ENCODE measurements at regions of chr13 and their contacts with region 1.

Region 1: DNA sequence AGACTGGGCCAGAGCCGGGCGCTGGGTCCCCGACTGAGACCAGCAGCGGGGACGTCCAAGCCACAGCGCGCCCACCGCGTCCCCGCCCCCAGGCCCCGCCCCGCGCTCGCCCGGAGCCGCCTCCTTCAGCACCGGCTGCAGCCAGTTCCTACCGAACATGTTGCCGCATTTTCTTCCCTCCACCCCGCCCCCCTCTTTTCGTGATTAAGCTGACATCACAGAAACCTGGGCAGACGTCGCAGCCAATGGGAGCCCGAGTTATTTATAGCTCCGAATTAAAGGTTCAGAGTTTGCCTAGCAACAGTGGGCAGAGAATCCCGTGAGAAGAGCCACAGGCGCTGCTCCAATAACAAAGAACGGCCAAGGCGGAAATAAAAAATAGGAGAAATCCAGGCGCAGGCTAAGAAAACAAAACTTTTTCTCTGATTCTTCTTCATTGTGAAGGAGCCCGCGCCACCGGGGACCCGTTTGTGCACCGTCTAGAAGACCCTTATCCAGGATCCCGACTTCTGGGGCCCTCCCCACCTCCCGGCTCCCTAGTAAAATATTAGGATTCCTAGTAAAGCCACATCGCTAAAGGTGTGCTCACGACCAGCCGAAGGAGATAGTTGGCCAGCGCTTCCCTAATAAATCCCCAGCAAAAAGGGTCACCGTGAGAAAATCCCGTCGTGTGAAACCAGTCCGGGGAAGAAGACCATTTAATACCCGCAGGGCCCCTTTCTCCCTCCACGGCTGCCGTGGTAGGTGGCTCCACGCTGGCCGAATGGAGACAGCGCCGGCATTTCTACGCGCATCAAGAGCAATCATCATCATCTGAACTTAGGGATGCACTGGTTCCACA is 61.7 kb downstream of the SERP2 start:
- DNase-seq: peak; percentile 77 to 97 (median 94)
- H3K4me3 ChIP-seq: peak overlapping the region; percentile 56 to 99 (median 87)
- H3K27ac ChIP-seq: peak overlapping the region; percentile 90 to 100 (median 98)
- H3K27me3 ChIP-seq: no peaks in the 10 kb centered on the region
- CTCF ChIP-seq: peak in 6 of 56 donors; percentile 1 to 23 (median 10)

Region 2: GRCh38 chr13:43905435-43906031 is 529.8 kb before region 1 on chr13:
- intact Hi-C with region 1: loop called (anchors 2 kb)
- DNase-seq: peak in 2 of 10 donors; percentile 35 to 51
- H3K4me3 ChIP-seq: no peak overlapping the region
- H3K27ac ChIP-seq: no peak overlapping the region
- H3K27me3 ChIP-seq: no peaks in the 10 kb centered on the region
- CTCF ChIP-seq: peak; percentile 81 to 98 (median 92)

Region 3: GRCh38 chr13:44050450-44051063 is 384.8 kb before region 1 on chr13:
- intact Hi-C with region 1: loop called (anchors 2 to 5 kb)
- DNase-seq: peak in 1 of 10 donors; percentile 15
- H3K4me3 ChIP-seq: peak overlapping the region in 2 of 59 donors; percentile 3 to 14
- H3K27ac ChIP-seq: peak overlapping the region in 3 of 59 donors; percentile 7 to 47 (median 28)
- H3K27me3 ChIP-seq: no peaks in the 10 kb centered on the region
- CTCF ChIP-seq: peak; percentile 69 to 96 (median 88)

Region 4: DNA sequence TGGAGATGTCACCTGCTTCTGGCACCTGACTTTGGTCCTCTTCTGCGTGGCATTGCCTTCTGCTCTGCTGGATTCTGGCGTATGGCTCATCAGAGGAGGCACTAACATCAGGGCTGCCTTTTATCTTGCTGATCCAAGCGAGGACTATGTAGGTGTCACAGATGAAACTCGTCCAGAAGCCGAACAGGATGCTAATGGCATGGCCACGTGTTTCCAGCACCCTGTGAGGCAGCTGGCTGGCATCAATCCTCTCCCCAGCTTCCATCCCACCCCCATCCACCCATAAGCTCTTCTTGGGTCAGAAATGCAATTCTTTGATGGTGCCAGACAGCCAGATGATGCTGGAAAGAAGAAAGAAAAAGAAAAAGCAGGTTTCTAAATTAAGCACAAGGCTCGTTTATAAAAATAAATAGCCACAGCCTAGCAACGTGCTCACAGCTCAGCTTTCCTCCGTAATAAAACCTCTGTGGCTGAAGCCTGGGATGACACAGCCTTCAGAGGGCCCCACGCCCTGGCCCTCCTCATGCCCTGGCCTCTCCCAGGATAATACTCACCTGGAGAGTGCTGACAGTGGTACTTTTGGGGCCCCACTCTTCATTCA is 274.7 kb before region 1 on chr13:
- intact Hi-C with region 1: loop called in 1 of 2 experiments (anchors 5 kb)
- DNase-seq: peak in 9 of 10 donors; percentile 34 to 85 (median 69)
- H3K4me3 ChIP-seq: no peak overlapping the region
- H3K27ac ChIP-seq: peak overlapping the region in 58 of 59 donors; percentile 41 to 92 (median 82)
- H3K27me3 ChIP-seq: no peaks in the 10 kb centered on the region
- CTCF ChIP-seq: no peak

Region 5: GRCh38 chr13:44237276-44237767 is 198.0 kb before region 1 on chr13:
- intact Hi-C with region 1: loop called in 1 of 2 experiments (anchors 2 kb)
- DNase-seq: peak in 8 of 10 donors; percentile 15 to 74 (median 62)
- H3K4me3 ChIP-seq: no peak overlapping the region
- H3K27ac ChIP-seq: peak overlapping the region; percentile 71 to 99 (median 93)
- H3K27me3 ChIP-seq: no peaks in the 10 kb centered on the region
- CTCF ChIP-seq: no peak

Region 6: GRCh38 chr13:44306401-44307192 is 128.8 kb before region 1 on chr13:
- intact Hi-C with region 1: loop called in 1 of 2 experiments (anchors 5 kb)
- DNase-seq: peak in 1 of 10 donors; percentile 51
- H3K4me3 ChIP-seq: peak overlapping the region in 22 of 59 donors; percentile 5 to 42 (median 20)
- H3K27ac ChIP-seq: peak overlapping the region in 58 of 59 donors; percentile 35 to 92 (median 83)
- H3K27me3 ChIP-seq: no peaks in the 10 kb centered on the region
- CTCF ChIP-seq: no peak

Measured in dorsolateral prefrontal cortex (tissue), 120 donors.